AG04450 (cell line): ENCODE measurements at regions of chr1 and their contacts with region 1.

Region 1: GRCh38 chr1:145906954-145907753 is 2.7 kb downstream of the ITGA10 start:
- DNase-seq: no peak
- H3K4me3 ChIP-seq: no peak overlapping the region
- H3K27ac ChIP-seq: no peak overlapping the region
- H3K27me3 ChIP-seq: no peaks in the 10 kb centered on the region
- CTCF ChIP-seq: no peak

Region 2: GRCh38 chr1:145720877-145721671 is 186.1 kb before region 1 on chr1:
- CTCF ChIA-PET with region 1: no interaction called
- POLR2A ChIA-PET with region 1: no interaction called
- DNase-seq: peak; percentile 29
- H3K4me3 ChIP-seq: peak overlapping the region; percentile 36
- H3K27ac ChIP-seq: peak overlapping the region; percentile 84
- H3K27me3 ChIP-seq: no peaks in the 10 kb centered on the region
- CTCF ChIP-seq: peak; percentile 82

Region 3: GRCh38 chr1:145918144-145918992 is 11.2 kb after region 1 on chr1 and contains the start of gene PEX11B:
- CTCF ChIA-PET with region 1: interaction called, 23 read pairs
- POLR2A ChIA-PET with region 1: no interaction called
- DNase-seq: peak; percentile 65
- H3K4me3 ChIP-seq: peak within 1 kb of the TSS; percentile 95
- H3K27ac ChIP-seq: peak within 1 kb of the TSS; percentile 84
- H3K27me3 ChIP-seq: no peaks in the 10 kb centered on the region
- CTCF ChIP-seq: no peak
- polyA plus RNA-seq, gene PEX11B: 44.2 and 51.1 TPM in 2 replicates